CD14-positive monocyte (primary cell): ENCODE measurements at regions of chr22 and their contacts with region 1.

Region 1: DNA sequence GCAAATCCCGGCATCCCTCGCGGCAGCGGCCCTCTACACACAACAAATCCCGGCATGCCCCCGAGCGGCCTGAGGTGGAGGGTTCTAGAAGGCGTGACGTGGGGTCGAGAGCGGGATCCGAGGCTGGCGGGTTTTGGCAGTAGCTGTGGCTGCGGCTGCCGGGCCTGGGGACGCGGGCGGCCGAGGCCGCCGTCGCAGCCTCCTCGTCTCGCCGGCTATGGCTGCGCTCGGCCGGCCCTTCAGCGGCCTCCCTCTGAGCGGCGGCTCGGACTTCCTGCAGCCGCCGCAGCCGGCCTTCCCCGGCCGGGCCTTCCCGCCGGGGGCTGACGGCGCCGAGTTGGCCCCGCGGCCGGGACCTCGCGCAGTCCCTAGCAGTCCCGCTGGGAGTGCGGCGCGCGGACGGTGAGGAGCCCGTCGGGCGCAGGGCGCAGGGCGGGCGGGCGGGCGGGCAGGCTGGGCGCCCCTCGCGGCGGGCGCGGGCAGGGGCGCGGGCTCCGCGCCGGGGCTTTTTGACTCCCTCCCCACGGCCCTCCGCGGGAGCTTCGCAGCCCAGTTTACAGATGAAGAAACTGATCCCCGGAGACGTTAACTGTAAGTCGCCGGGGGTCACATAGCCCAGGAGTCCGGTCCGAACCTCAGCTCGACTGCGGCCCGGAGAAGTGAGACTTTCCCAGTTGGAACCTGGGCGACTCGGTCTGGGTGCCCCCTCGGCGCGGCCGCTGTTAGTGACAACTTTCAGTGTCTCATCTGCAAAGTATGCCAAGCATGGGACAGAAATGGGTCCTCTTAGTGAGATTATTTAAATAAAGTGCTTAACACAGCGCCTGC is at the start of gene CCDC117:
- DNase-seq: peak; percentile 89 to 93 (median 90)
- H3K4me3 ChIP-seq: peak within 1 kb of the TSS; percentile 85 to 95 (median 90)
- H3K4me3 Mint-ChIP-seq: peak within 1 kb of the TSS; percentile 87 to 93
- H3K27ac ChIP-seq: peak within 1 kb of the TSS; percentile 83 to 93
- H3K27ac Mint-ChIP-seq: peak within 1 kb of the TSS; percentile 83 to 97 (median 92)
- H3K4me1 ChIP-seq: peaks cover 17 to 19% of the 10 kb centered on the region in 2 donors
- H3K4me1 Mint-ChIP-seq: peaks cover 20% of the 10 kb centered on the region
- H3K27me3 ChIP-seq: no peaks in the 10 kb centered on the region
- H3K27me3 Mint-ChIP-seq: peaks cover 0 to 2% (median 1%) of the 10 kb centered on the region in 3 donors
- CTCF ChIP-seq: peak; percentile 54
- polyA plus RNA-seq, gene CCDC117: 6.8 to 12.6 (median 10.3) TPM

Region 2: GRCh38 chr22:28741758-28742561 is 30.9 kb before region 1 on chr22 and contains the starts of genes CHEK2 and HSCB:
- intact Hi-C with region 1: loop called (anchors 1 to 2 kb)
- DNase-seq: peak; percentile 96 to 98 (median 97)
- H3K4me3 ChIP-seq: peak within 1 kb of the TSS; percentile 66 to 100 (median 91)
- H3K4me3 Mint-ChIP-seq: peak within 1 kb of the TSS; percentile 96 to 98
- H3K27ac ChIP-seq: peak within 1 kb of the TSS; percentile 85 to 89
- H3K27ac Mint-ChIP-seq: peak within 1 kb of the TSS; percentile 92 to 98 (median 96)
- H3K4me1 ChIP-seq: peaks cover 11 to 22% of the 10 kb centered on the region in 2 donors
- H3K4me1 Mint-ChIP-seq: peaks cover 25% of the 10 kb centered on the region
- H3K27me3 ChIP-seq: no peaks in the 10 kb centered on the region
- H3K27me3 Mint-ChIP-seq: no peaks in the 10 kb centered on the region
- CTCF ChIP-seq: no peak
- polyA plus RNA-seq, gene CHEK2: 6.6 to 13.1 (median 7.8) TPM
- polyA plus RNA-seq, gene HSCB: 10.1 to 13.2 (median 10.3) TPM

Region 3: DNA sequence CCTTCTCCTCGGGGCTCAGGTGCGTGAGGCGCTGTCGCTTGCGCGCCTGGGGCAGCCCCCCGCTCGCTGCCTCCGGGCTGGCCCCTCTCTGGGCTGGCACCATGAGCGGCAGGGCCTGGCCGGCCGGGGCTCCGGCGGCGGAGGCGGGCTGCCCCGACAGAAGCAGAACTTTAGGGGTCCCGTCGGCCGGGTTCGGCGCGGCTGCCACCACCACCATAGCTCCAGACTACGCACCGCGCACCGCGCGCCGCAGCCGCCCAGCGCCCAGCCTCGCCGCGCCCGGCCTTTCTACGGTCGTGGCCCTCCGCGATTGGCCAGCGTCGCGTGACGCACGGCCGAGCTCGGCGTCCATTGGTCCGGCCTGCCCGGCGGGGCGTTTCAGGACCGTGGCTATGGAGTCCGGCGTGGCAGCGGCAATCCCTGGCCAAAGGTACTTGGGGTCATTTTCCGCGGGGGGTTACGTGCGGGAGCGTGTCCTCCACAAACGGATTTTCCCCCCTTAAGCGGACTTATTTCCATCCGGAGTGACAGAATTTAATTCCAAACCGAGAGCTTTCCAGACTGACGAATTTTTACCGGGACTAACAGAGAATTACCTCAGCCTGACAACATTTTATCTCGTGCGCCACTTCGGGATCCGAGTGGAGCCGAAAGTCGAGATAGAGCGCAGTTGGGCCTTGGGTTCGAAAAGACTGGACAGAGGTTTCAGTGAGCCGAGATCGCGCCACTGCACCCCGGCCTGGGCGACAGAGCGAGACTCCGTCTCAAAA is 27.6 kb after region 1 on chr22 and contains the start of gene XBP1:
- intact Hi-C with region 1: loop called in 1 of 2 experiments (anchors 2 kb)
- DNase-seq: peak; percentile 92 to 96 (median 96)
- H3K4me3 ChIP-seq: peak within 1 kb of the TSS; percentile 91 to 98 (median 94)
- H3K4me3 Mint-ChIP-seq: peak within 1 kb of the TSS; percentile 91 to 98
- H3K27ac ChIP-seq: peak within 1 kb of the TSS; percentile 98 to 99
- H3K27ac Mint-ChIP-seq: peak within 1 kb of the TSS; percentile 98 to 100 (median 99)
- H3K4me1 ChIP-seq: peaks cover 39 to 50% of the 10 kb centered on the region in 2 donors
- H3K4me1 Mint-ChIP-seq: peaks cover 50% of the 10 kb centered on the region
- H3K27me3 ChIP-seq: no peaks in the 10 kb centered on the region
- H3K27me3 Mint-ChIP-seq: peaks cover 0 to 7% (median 1%) of the 10 kb centered on the region in 3 donors
- CTCF ChIP-seq: no peak
- polyA plus RNA-seq, gene XBP1: 175 to 215 (median 201) TPM

Region 4: GRCh38 chr22:28829358-28830181 is 56.7 kb after region 1 on chr22:
- intact Hi-C with region 1: loop called in 1 of 2 experiments (anchors 10 kb)
- DNase-seq: peak; percentile 80 to 81 (median 80)
- H3K4me3 ChIP-seq: peak overlapping the region in 2 of 3 experiments; percentile 25 to 66
- H3K4me3 Mint-ChIP-seq: peak overlapping the region; percentile 56 to 83
- H3K27ac ChIP-seq: peak overlapping the region; percentile 36 to 73
- H3K27ac Mint-ChIP-seq: peak overlapping the region; percentile 62 to 89 (median 80)
- H3K4me1 ChIP-seq: peaks cover 21 to 26% of the 10 kb centered on the region in 2 donors
- H3K4me1 Mint-ChIP-seq: peaks cover 45% of the 10 kb centered on the region
- H3K27me3 ChIP-seq: no peaks in the 10 kb centered on the region
- H3K27me3 Mint-ChIP-seq: peaks cover 0 to 3% (median 0%) of the 10 kb centered on the region in 3 donors
- CTCF ChIP-seq: peak; percentile 97

Region 5: DNA sequence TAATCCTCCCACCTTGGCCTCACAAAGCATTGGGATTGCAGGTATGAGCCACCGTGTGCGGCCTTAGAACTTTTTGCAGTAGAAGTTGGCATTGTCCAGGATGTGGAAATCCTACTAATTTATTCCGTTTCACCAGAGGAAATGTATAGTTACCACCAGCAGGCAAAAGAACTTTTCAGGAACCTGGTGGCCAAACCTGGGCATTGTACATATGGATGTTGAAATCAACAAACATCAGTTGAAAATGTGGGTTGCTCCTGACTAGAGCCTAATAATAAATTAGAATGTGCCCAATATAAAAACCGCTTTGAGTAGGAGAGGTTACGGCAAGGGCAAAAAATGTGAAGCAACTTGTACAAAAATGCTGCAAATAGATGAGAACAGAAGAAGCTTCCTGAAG is 68.3 kb after region 1 on chr22:
- intact Hi-C with region 1: no loop called
- DNase-seq: no peak
- H3K4me3 ChIP-seq: no peak overlapping the region
- H3K4me3 Mint-ChIP-seq: no peak overlapping the region
- H3K27ac ChIP-seq: no peak overlapping the region
- H3K27ac Mint-ChIP-seq: no peak overlapping the region
- H3K4me1 ChIP-seq: peaks cover 8 to 11% of the 10 kb centered on the region in 2 donors
- H3K4me1 Mint-ChIP-seq: peaks cover 15% of the 10 kb centered on the region
- H3K27me3 ChIP-seq: no peaks in the 10 kb centered on the region
- H3K27me3 Mint-ChIP-seq: no peaks in the 10 kb centered on the region
- CTCF ChIP-seq: no peak